ENCODE measurements at regions of chr15 and their contacts with region 1.

Region 1: GRCh38 chr15:25508369-25509002 is 69.7 kb upstream of the UBE3A start:
- DNase-seq: no peak
- ATAC-seq: peak; percentile 39; the same call in 1 of the 3 replicates
- H3K4me3 ChIP-seq: no peak overlapping the region
- H3K27ac ChIP-seq: no peak overlapping the region
- H3K4me1 ChIP-seq: no peaks in the 10 kb centered on the region
- H3K27me3 ChIP-seq: no peaks in the 10 kb centered on the region
- CTCF ChIP-seq: peak; percentile 36 to 58 (median 39); a peak in 4 of 6 replicates
- EP300 ChIP-seq: no peak
- POLR2A ChIP-seq: no peak
- RAD21 ChIP-seq: peak; percentile 59

Region 2: GRCh38 chr15:23642413-23643044 is 1866.0 kb before region 1 on chr15:
- CTCF ChIA-PET with region 1: no interaction called
- POLR2A ChIA-PET with region 1: no interaction called
- RAD21 ChIA-PET with region 1: no interaction called
- SMC1A ChIA-PET with region 1: no interaction called
- in situ Hi-C with region 1: loop called (anchors 25 kb)
- intact Hi-C with region 1: loop called (anchors 10 kb)
- DNase-seq: no peak
- ATAC-seq: peak; percentile 64
- H3K4me3 ChIP-seq: no peak overlapping the region
- H3K27ac ChIP-seq: no peak overlapping the region
- H3K4me1 ChIP-seq: no peaks in the 10 kb centered on the region
- H3K27me3 ChIP-seq: no peaks in the 10 kb centered on the region
- CTCF ChIP-seq: peak; percentile 48 to 74 (median 48); a peak in 5 of 6 replicates
- EP300 ChIP-seq: no peak
- POLR2A ChIP-seq: no peak
- RAD21 ChIP-seq: peak; percentile 47; the same call in 1 of the 2 replicates

Region 3: DNA sequence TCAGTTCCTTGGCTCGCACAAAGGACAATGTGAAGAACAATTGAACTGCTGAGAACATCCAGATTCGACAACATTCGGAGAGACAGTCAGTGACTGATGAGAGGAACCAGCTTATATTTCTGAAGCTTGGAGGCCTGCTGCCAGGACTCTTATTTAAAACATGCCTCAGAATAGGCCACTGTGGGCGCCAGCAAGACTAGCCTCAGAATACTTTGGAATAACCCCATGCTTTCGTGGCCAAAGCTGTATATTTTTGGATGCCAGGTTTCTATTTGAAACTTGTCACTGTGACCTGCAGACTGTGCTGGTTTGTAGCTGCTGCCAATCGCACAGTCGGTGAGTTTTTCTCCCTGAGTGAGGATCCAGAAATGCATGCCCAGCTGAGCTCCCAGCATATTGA is 60.3 kb after region 1 on chr15:
- CTCF ChIA-PET with region 1: no interaction called
- POLR2A ChIA-PET with region 1: no interaction called
- RAD21 ChIA-PET with region 1: no interaction called
- SMC1A ChIA-PET with region 1: no interaction called
- in situ Hi-C with region 1: no loop called
- intact Hi-C with region 1: no loop called
- DNase-seq: no peak
- ATAC-seq: no peak
- H3K4me3 ChIP-seq: no peak overlapping the region
- H3K27ac ChIP-seq: no peak overlapping the region
- H3K4me1 ChIP-seq: no peaks in the 10 kb centered on the region
- H3K27me3 ChIP-seq: no peaks in the 10 kb centered on the region
- CTCF ChIP-seq: no peak
- EP300 ChIP-seq: no peak
- POLR2A ChIP-seq: no peak
- RAD21 ChIP-seq: no peak

Region 4: DNA sequence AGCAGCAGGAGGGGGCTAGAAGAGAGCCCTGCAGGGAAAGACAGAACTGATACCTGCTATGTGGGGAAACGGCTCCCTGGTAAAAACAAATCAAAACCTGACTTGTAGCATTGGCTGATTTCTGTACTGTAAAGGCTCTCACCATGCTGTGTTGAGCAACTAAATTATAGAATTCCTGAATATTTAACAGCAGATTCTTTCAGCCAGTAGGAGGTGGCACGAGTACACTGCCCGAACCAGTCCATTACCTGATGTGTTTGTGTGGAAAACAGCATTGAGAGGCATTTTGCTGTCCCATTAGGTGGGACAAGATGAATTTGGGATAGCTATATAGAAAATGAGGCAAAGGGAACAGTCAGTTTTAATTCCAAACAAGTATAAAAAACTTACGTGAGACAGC is 153.4 kb after region 1 on chr15:
- CTCF ChIA-PET with region 1: no interaction called
- POLR2A ChIA-PET with region 1: no interaction called
- RAD21 ChIA-PET with region 1: no interaction called
- SMC1A ChIA-PET with region 1: no interaction called
- in situ Hi-C with region 1: no loop called
- intact Hi-C with region 1: no loop called
- DNase-seq: no peak
- ATAC-seq: no peak
- H3K4me3 ChIP-seq: no peak overlapping the region
- H3K27ac ChIP-seq: no peak overlapping the region
- H3K4me1 ChIP-seq: no peaks in the 10 kb centered on the region
- H3K27me3 ChIP-seq: no peaks in the 10 kb centered on the region
- CTCF ChIP-seq: no peak
- EP300 ChIP-seq: no peak
- POLR2A ChIP-seq: no peak
- RAD21 ChIP-seq: no peak

Region 5: GRCh38 chr15:25710184-25710583 is 201.7 kb after region 1 on chr15:
- CTCF ChIA-PET with region 1: no interaction called
- POLR2A ChIA-PET with region 1: no interaction called
- RAD21 ChIA-PET with region 1: no interaction called
- SMC1A ChIA-PET with region 1: no interaction called
- in situ Hi-C with region 1: loop called (anchors 10 kb)
- intact Hi-C with region 1: no loop called
- DNase-seq: no peak
- ATAC-seq: peak; percentile 87
- H3K4me3 ChIP-seq: no peak overlapping the region
- H3K27ac ChIP-seq: no peak overlapping the region
- H3K4me1 ChIP-seq: no peaks in the 10 kb centered on the region
- H3K27me3 ChIP-seq: no peaks in the 10 kb centered on the region
- CTCF ChIP-seq: peak; percentile 34 to 65 (median 43); a peak in 4 of 6 replicates
- EP300 ChIP-seq: no peak
- POLR2A ChIP-seq: no peak
- RAD21 ChIP-seq: no peak

Region 6: DNA sequence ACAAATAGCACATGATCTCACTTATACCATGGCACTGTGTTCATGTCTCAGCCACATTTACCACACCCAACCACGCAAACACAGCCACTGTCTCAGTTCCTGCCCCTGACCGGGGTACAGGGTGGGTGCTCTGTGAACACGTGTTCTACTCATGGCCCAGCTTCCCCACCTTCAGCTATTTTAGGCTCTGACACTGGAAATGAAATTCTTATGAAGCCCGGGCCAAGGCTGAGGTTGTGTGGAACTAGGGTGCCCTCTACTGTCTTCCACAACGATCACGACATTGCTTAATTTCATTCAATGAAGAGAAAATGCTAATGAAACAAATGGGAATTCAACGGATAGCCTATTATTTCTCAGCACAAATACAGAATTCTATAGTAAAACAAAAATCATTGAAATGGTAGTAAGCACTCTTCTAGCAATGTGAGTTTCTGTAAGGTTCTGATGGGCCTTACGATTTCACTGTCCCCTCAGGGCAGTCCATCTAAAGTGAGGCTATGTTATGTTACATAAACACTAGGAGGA is 1356.2 kb after region 1 on chr15:
- CTCF ChIA-PET with region 1: no interaction called
- POLR2A ChIA-PET with region 1: no interaction called
- RAD21 ChIA-PET with region 1: no interaction called
- SMC1A ChIA-PET with region 1: no interaction called
- in situ Hi-C with region 1: loop called (anchors 25 kb)
- intact Hi-C with region 1: no loop called
- DNase-seq: no peak
- ATAC-seq: no peak
- H3K4me3 ChIP-seq: no peak overlapping the region
- H3K27ac ChIP-seq: no peak overlapping the region
- H3K4me1 ChIP-seq: no peaks in the 10 kb centered on the region
- H3K27me3 ChIP-seq: no peaks in the 10 kb centered on the region
- CTCF ChIP-seq: peak in 2 of 3 experiments; percentile 19 to 32; a peak in 3 of 6 replicates
- EP300 ChIP-seq: no peak
- POLR2A ChIP-seq: no peak
- RAD21 ChIP-seq: peak; percentile 43

Measured in GM12878 (cell line).